AG04450 (cell line): ENCODE measurements at regions of chr19 and their contacts with region 1.

Region 1: DNA sequence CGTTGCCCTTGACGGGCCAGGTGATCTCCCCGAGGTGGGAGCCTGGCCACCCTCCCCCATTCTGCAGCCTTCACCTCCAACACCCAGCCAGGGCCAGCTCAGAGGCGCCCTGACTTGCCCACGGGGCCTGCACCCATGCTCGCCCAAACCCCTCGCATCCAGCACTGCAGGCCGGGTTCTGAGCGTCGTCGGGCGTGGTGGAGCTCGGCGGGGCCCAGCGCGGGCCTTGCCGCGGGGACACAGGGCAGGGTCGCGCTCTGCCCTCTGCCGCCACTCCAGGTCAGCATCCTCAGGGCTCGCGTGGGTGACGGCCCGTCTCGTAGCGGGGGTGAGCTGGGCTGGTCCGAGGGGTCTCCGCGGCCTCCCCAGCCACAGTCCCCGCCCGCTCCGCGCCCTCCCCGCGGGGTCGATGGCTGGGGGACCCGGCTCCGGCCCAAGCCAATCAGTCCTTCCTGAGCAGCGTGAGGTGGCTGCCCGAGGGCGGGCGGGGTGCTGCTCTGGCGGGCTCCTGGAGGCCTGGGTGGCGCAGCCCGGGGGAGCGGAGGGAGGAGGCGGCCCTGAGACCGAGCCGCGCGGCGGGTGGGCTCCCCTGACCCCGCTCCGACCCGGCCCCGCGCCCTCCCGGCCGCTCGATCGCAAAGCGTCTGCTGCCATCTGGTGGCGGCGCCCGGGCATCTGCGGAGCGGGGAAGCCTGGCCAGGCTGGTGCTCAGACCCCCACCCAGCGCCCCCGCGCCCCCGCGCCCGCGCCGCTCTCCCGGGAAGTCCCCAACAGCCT is 61.4 kb downstream of the CCNE1 start:
- DNase-seq: no peak
- H3K4me3 ChIP-seq: peak overlapping the region; percentile 41; the same call in 1 of the 2 replicates
- H3K27ac ChIP-seq: no peak overlapping the region
- H3K27me3 ChIP-seq: peaks cover 4% of the 10 kb centered on the region
- CTCF ChIP-seq: peak; percentile 56

Region 2: DNA sequence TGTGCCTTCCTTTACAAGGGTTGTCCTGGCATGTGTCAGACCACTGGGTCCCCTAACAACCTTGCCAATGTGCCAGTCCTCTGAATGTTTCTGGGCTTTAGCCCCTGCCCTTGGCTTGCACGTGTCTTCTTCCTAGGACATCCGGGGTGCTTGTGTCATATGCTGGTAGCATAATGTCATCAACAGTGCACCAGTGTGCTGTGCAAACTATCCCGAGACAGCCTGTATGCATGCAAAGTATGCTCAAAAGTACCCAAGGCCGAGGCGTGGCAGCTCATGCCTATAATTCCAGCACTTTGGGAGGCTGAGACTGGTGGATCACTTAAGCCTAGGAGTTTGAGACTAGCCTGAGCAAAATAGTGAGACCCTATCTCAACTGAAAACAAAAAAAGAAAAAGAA is 137.4 kb before region 1 on chr19:
- CTCF ChIA-PET with region 1: interaction called, 51 read pairs
- POLR2A ChIA-PET with region 1: no interaction called
- DNase-seq: no peak
- H3K4me3 ChIP-seq: no peak overlapping the region
- H3K27ac ChIP-seq: no peak overlapping the region
- H3K27me3 ChIP-seq: peaks cover 5% of the 10 kb centered on the region
- CTCF ChIP-seq: no peak

Region 3: GRCh38 chr19:29761575-29762232 is 111.5 kb before region 1 on chr19:
- CTCF ChIA-PET with region 1: interaction called, 55 read pairs
- POLR2A ChIA-PET with region 1: no interaction called
- DNase-seq: no peak
- H3K4me3 ChIP-seq: no peak overlapping the region
- H3K27ac ChIP-seq: no peak overlapping the region
- H3K27me3 ChIP-seq: peaks cover 4% of the 10 kb centered on the region
- CTCF ChIP-seq: no peak

Region 4: GRCh38 chr19:29771708-29772414 is 101.4 kb before region 1 on chr19:
- CTCF ChIA-PET with region 1: interaction called, 10 read pairs
- POLR2A ChIA-PET with region 1: no interaction called
- DNase-seq: peak; percentile 4
- H3K4me3 ChIP-seq: no peak overlapping the region
- H3K27ac ChIP-seq: no peak overlapping the region
- H3K27me3 ChIP-seq: no peaks in the 10 kb centered on the region
- CTCF ChIP-seq: peak; percentile 84

Region 5: GRCh38 chr19:29908963-29909944 is 36.0 kb after region 1 on chr19:
- CTCF ChIA-PET with region 1: no interaction called
- POLR2A ChIA-PET with region 1: no interaction called
- DNase-seq: no peak
- H3K4me3 ChIP-seq: no peak overlapping the region
- H3K27ac ChIP-seq: no peak overlapping the region
- H3K27me3 ChIP-seq: no peaks in the 10 kb centered on the region
- CTCF ChIP-seq: no peak

Region 6: GRCh38 chr19:30204721-30205120 is 331.5 kb after region 1 on chr19:
- CTCF ChIA-PET with region 1: interaction called, 10 read pairs
- POLR2A ChIA-PET with region 1: no interaction called
- DNase-seq: no peak
- H3K4me3 ChIP-seq: no peak overlapping the region
- H3K27ac ChIP-seq: no peak overlapping the region
- H3K27me3 ChIP-seq: no peaks in the 10 kb centered on the region
- CTCF ChIP-seq: no peak